ENCODE measurements at regions of chr4 and their contacts with region 1.

Region 1: DNA sequence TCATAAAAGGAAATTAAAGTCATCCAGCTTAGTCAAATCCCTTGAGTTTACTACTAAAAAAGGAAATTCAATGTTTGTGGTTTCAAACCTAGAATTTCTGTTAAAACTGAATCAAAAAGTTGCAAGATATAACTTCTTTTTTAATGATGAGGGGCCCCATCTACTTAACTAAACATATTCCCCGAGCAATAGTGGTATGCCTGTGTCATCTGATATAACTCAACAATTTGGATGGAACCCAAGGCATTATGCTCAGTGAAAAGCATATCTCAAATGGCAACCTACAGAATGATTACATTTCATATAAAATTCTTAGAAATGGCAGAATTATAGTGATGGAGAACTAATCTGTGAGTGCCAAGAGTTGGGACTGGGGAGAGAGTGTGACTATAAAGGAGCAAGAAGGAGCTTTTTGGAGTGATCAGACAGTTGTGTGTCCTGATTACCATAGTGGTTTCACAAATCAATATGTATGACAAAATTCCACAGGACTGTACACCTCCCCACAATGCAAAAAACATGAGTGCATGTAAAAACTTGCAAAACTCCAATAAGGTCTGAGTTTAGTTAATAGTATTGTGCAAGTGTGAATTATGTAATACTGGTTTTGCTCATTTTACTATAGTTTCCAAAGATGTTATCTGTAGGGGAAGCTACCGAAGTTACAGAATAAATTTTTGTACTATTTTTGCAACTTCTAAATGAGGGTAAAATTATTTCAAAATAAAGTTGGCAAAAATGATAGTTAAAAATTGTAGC is 323.2 kb downstream of the ARHGAP24 start:
- DNase-seq: no peak
- H3K4me3 ChIP-seq: no peak overlapping the region
- H3K27ac ChIP-seq: no peak overlapping the region
- H3K4me1 ChIP-seq: peaks cover 27% of the 10 kb centered on the region
- H3K27me3 ChIP-seq: no peaks in the 10 kb centered on the region
- CTCF ChIP-seq: no peak
- POLR2A ChIP-seq: no peak

Region 2: DNA sequence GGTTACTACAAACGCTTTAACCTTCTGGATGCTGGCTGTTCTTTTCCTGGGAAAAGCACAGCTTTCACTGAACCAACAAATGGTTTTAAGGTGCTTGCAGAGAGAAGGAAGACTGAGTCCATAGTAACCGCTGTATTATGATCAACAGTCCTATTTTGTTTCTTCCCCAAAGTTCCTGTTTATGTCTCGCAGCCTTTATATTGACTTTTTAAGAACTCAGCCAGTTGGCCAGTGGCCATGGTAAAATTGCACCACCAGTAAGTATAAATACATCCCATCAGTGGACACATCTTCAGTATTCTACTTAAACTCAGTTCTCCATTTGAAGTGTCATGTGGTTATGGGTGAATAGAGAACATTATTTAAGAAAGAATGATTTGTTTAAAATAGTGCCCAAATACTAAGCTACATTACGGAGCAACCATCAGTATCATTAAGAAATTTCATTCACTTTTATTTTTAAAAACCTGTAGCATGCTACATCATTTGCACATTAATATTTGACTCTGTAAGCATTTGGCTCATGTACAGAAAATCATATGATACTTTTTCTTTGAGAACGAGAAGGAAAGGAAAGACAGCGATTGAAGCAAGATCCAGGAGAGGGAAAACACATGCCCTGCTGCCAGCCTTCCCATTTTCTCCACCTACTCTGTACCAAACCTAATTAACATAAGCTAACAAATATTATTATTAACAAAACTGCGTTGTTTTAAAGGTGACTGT is 36.2 kb before region 1 on chr4:
- CTCF ChIA-PET with region 1: interaction called, 59 read pairs
- POLR2A ChIA-PET with region 1: no interaction called
- dilution Hi-C with region 1: no loop called
- intact Hi-C with region 1: loop called (anchors 1 kb)
- DNase-seq: peak; percentile 99
- H3K4me3 ChIP-seq: peak overlapping the region in 2 of 3 experiments; percentile 21 to 60
- H3K27ac ChIP-seq: peak overlapping the region; percentile 90
- H3K4me1 ChIP-seq: peaks cover 53% of the 10 kb centered on the region
- H3K27me3 ChIP-seq: no peaks in the 10 kb centered on the region
- CTCF ChIP-seq: no peak
- POLR2A ChIP-seq: no peak

Region 3: DNA sequence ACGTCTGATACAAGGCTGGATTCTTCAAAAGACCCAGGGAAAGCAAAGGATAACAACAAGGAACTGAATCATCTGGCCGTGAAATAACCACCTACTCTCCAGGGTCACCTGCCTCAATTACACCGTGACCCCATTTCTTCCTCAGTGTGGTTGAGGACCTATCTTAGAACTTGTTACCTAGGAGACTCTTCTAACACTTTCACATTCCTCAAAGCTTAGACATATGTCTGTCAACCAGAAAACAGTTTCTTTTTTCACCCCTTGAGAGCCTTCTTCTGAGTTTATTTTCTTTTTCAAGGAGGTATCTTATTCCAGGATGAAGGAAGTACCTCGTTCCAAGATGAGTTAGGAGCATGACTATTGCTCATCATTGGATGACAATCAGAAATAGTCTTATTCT is 14.6 kb after region 1 on chr4:
- CTCF ChIA-PET with region 1: interaction called, 42 read pairs
- POLR2A ChIA-PET with region 1: no interaction called
- dilution Hi-C with region 1: no loop called
- intact Hi-C with region 1: no loop called
- DNase-seq: peak; percentile 70
- H3K4me3 ChIP-seq: no peak overlapping the region
- H3K27ac ChIP-seq: peak overlapping the region; percentile 51
- H3K4me1 ChIP-seq: peaks cover 31% of the 10 kb centered on the region
- H3K27me3 ChIP-seq: no peaks in the 10 kb centered on the region
- CTCF ChIP-seq: no peak
- POLR2A ChIP-seq: no peak

Region 4: DNA sequence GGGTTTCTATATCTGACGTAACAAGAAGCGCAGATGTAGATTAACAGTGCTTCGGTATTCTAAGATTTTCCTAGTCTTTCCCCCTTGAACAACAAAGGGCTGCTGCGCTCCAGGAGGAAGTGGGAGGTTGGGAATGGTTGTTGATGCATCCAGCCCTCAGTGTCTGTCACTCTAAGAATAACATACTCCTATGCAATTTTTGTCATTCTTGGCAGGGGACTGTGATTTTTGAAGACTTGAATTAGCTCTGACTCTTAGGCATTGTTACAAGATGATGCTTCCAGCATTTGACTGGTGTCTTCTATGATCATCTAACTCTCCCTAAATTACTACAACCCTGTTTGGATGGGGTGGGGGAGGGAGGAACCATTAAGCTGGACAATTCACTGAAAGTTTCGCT is 71.0 kb after region 1 on chr4:
- CTCF ChIA-PET with region 1: interaction called, 10 read pairs
- POLR2A ChIA-PET with region 1: no interaction called
- dilution Hi-C with region 1: no loop called
- intact Hi-C with region 1: no loop called
- DNase-seq: peak; percentile 59
- H3K4me3 ChIP-seq: no peak overlapping the region
- H3K27ac ChIP-seq: peak overlapping the region; percentile 45
- H3K4me1 ChIP-seq: peaks cover 26% of the 10 kb centered on the region
- H3K27me3 ChIP-seq: no peaks in the 10 kb centered on the region
- CTCF ChIP-seq: no peak
- POLR2A ChIP-seq: no peak

Region 5: GRCh38 chr4:85963231-85963630 is 165.0 kb after region 1 on chr4:
- CTCF ChIA-PET with region 1: interaction called, 176 read pairs
- POLR2A ChIA-PET with region 1: no interaction called
- dilution Hi-C with region 1: no loop called
- intact Hi-C with region 1: no loop called
- DNase-seq: no peak
- H3K4me3 ChIP-seq: no peak overlapping the region
- H3K27ac ChIP-seq: no peak overlapping the region
- H3K4me1 ChIP-seq: peaks cover 25% of the 10 kb centered on the region
- H3K27me3 ChIP-seq: no peaks in the 10 kb centered on the region
- CTCF ChIP-seq: no peak
- POLR2A ChIP-seq: no peak

Region 6: DNA sequence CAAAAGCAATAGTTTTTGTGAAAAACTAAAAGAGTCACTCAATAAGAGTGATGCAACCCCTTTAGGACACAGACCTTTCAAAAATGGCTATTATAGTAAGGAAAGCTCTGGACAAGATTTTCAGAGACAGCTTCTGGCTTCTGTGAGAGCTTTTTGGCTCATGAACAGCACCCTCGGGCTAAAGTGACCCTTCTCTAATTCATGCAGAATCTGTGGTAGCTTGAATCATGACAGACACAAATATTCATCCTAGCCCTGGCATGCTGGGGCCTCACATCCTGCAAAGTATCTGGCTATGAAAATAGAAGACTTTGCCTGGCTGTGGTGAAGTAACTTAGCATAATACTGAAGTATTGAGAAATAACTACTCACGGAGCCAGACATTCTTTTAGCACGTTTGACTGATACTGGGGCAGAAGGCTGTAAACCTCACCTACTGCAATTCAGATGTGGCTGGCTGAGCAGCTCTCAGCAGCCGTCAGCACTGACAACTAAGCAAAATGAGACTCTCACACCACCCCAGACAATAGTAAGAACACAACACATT is 234.4 kb after region 1 on chr4:
- CTCF ChIA-PET with region 1: interaction called, 19 read pairs
- POLR2A ChIA-PET with region 1: no interaction called
- dilution Hi-C with region 1: no loop called
- intact Hi-C with region 1: no loop called
- DNase-seq: no peak
- H3K4me3 ChIP-seq: no peak overlapping the region
- H3K27ac ChIP-seq: peak overlapping the region; percentile 50
- H3K4me1 ChIP-seq: peaks cover 40% of the 10 kb centered on the region
- H3K27me3 ChIP-seq: no peaks in the 10 kb centered on the region
- CTCF ChIP-seq: no peak
- POLR2A ChIP-seq: no peak

Measured in endothelial cell of umbilical vein (primary cell).